Natural killer cell (primary cell): ENCODE measurements at regions of chr10 and their contacts with region 1.

Region 1: DNA sequence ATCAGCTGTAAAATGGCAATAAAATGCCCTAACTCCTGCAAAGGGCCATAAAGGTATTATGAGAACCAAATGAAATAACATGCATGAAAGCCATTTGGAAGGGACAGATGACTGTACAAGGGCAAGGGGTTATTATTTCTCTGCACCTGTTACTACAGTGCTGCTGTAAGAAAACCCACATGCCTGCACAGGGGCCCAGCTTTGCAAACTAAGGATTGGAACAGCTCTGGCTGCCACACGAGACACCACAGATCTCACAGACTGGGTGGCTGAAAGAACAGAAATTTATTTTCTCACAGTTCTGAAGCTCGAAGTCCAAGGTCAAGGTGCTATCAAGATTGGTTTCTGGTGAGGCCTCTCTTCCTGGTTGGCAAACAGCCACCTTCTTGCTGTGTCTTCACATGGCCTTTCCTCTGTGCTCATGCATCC is 409.0 kb upstream of the NRP1 start:
- DNase-seq: peak; percentile 14 to 24
- ATAC-seq: peak; percentile 68 to 81 (median 80)
- H3K4me3 ChIP-seq: no peak overlapping the region
- H3K4me3 Mint-ChIP-seq: peak overlapping the region; percentile 45
- H3K27ac ChIP-seq: peak overlapping the region; percentile 19
- H3K27ac Mint-ChIP-seq: peak overlapping the region; percentile 61 to 73
- H3K4me1 ChIP-seq: peaks cover 39% of the 10 kb centered on the region
- H3K4me1 Mint-ChIP-seq: peaks cover 33 to 69% of the 10 kb centered on the region in 2 donors
- H3K27me3 ChIP-seq: no peaks in the 10 kb centered on the region
- H3K27me3 Mint-ChIP-seq: no peaks in the 10 kb centered on the region
- CTCF ChIP-seq: no peak

Region 2: GRCh38 chr10:33799281-33799943 is 56.0 kb after region 1 on chr10:
- intact Hi-C with region 1: loop called (anchors 5 kb)
- DNase-seq: no peak
- ATAC-seq: no peak
- H3K4me3 ChIP-seq: no peak overlapping the region
- H3K4me3 Mint-ChIP-seq: no peak overlapping the region
- H3K27ac ChIP-seq: no peak overlapping the region
- H3K27ac Mint-ChIP-seq: no peak overlapping the region
- H3K4me1 ChIP-seq: peaks cover 18% of the 10 kb centered on the region
- H3K4me1 Mint-ChIP-seq: peaks cover 24 to 25% of the 10 kb centered on the region in 2 donors
- H3K27me3 ChIP-seq: no peaks in the 10 kb centered on the region
- H3K27me3 Mint-ChIP-seq: peaks cover 0 to 5% of the 10 kb centered on the region in 2 donors
- CTCF ChIP-seq: no peak

Region 3: DNA sequence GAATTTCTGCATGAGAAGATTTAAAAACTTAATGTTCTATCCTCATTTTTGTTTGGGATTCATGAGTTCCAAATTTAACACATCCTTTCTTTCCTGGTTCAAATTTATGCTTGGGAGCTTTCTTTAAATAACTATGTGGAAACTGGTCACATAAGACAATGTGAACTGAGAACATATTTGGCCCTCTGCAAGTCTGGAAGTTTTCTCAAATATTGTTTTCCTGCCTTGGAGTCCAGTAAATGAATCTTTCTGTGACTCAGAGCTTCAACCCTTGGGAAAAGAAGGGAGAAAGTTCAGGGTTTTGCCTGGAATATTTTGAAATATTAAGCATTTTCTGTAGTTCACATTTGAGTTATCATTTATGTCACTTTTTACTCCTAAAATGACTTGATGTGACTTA is 150.1 kb after region 1 on chr10:
- intact Hi-C with region 1: no loop called
- DNase-seq: no peak
- ATAC-seq: no peak
- H3K4me3 ChIP-seq: no peak overlapping the region
- H3K4me3 Mint-ChIP-seq: no peak overlapping the region
- H3K27ac ChIP-seq: no peak overlapping the region
- H3K27ac Mint-ChIP-seq: no peak overlapping the region
- H3K4me1 ChIP-seq: no peaks in the 10 kb centered on the region
- H3K4me1 Mint-ChIP-seq: no peaks in the 10 kb centered on the region
- H3K27me3 ChIP-seq: no peaks in the 10 kb centered on the region
- H3K27me3 Mint-ChIP-seq: peaks cover 5 to 13% of the 10 kb centered on the region in 2 donors
- CTCF ChIP-seq: no peak